Dendritic cell treated with granulocyte-macrophage colony-stimulating factor and Interleukin-4, amounts not matched to agents 40 ng/mL and 50 ng/mL, for 4 days (primary cell): ENCODE measurements at regions of chr6 and their contacts with region 1.

Region 1: DNA sequence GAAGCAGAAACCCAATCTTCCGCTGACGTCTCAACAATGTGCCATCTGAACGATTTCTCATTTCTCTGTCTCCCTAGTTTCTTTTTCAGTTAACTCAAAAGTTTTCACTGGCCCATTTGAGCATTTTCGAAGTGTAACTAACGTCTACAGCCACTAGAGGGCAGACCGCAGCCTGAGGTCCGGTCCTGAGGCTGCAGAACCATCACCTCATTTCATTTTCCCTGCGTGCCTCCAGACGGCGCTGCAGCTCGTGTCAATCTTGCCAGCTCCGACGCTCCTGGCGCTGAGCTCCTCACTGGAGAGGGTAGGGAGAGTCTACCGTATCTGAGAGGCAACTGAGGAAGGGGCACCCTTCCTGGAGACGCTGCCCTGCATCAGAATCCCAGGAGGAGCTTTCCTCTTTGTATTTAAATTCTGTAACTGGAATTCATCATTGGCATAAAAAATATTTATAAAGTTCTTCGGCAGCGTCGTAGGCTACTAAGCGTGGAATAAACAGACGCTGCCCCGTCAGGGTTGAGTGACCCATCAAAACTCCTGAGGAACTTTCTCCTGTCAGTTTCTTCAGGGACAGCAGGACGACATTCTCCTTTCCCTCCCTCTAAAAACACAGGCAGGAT is 28.5 kb upstream of the DTNBP1 start:
- H3K4me3 Mint-ChIP-seq: no peak overlapping the region
- H3K27ac Mint-ChIP-seq: peak overlapping the region; percentile 18
- H3K4me1 Mint-ChIP-seq: peaks cover 23% of the 10 kb centered on the region
- H3K27me3 Mint-ChIP-seq: peaks cover 1% of the 10 kb centered on the region

Region 2: DNA sequence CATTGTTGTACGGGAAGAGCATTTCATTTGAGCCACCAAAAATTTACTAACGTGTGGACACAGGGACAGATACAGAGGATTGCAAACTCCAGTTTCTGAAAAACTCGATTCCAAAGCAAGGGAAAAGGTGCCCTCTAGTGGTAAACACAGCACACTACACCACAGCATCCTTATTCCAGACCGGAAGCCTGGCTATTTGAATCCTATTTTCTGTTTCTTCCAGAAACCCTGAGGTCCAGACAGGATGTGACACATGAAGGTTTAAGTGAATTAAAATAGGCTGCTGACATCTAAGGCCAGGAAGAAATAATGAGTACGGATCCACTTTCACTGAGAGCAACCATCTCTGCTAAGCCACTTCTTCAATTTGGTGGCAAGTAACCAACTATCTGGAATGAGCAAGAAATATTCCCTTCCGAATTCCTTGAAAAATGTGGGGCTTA is 515.3 kb after region 1 on chr6:
- intact Hi-C with region 1: loop called (anchors 1 kb)
- H3K4me3 Mint-ChIP-seq: no peak overlapping the region
- H3K27ac Mint-ChIP-seq: no peak overlapping the region
- H3K4me1 Mint-ChIP-seq: no peaks in the 10 kb centered on the region
- H3K27me3 Mint-ChIP-seq: peaks cover 20% of the 10 kb centered on the region